Mammary epithelial cell (primary cell): ENCODE measurements at regions of chr10 and their contacts with region 1.

Region 1: DNA sequence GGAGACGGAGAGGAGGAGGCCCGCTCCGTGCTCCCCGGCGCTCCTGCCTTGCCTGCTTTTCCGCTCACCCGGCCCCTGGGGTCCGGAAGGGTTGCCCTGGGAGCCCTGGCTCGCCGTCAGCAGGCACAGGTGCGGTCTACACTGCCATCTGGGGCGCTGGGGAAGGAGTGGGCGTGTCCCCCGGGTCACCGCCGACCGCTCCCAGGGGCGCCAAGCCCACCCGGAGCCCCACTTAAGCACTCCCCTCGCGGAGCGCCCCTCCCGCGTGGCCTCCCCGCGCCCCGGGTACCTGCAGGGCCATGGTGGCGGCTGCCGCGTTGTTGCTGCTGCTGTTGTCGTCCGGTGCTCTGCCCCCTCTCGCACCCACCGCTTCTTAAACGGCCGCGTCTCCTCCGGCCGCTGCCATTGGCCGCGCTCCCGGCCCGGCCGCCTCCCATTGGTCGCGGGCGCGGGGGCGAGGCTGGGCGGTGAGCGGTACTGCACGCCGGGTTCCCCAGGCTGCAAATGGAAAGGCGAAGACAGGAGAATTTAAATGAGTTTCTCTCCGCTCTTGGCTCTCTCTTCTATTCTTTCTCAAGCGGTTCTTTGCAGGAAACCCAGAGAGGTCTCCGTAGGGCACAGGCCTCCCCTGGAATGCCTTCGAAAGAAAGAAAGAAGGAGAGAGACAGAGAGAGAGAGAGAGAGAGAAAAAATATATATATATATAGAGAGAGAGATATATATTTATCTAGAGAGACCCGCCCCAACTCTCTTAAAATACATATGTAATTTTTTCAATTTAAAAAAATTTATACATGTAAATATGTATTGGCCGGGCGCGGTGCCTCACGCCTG is at the start of gene ACBD7:
- DNase-seq: peak; percentile 80
- H3K4me3 ChIP-seq: peak within 1 kb of the TSS; percentile 62 to 68 (median 64)
- H3K27ac ChIP-seq: no peak within 1 kb of the TSS
- H3K4me1 ChIP-seq: peaks cover 4% of the 10 kb centered on the region
- H3K27me3 ChIP-seq: no peaks in the 10 kb centered on the region
- CTCF ChIP-seq: peak; percentile 18 to 34
- total RNA-seq, gene ACBD7: 0.33 to 0.85 TPM

Region 2: GRCh38 chr10:13348216-13349017 is 1740.2 kb before region 1 on chr10 and contains the start of gene SEPHS1:
- CTCF ChIA-PET with region 1: no interaction called
- dilution Hi-C with region 1: no loop called
- in situ Hi-C with region 1: no loop called
- intact Hi-C with region 1: loop called (anchors 5 kb)
- DNase-seq: peak; percentile 60
- H3K4me3 ChIP-seq: peak within 1 kb of the TSS; percentile 66 to 93 (median 69)
- H3K27ac ChIP-seq: peak within 1 kb of the TSS; percentile 72
- H3K4me1 ChIP-seq: peaks cover 18% of the 10 kb centered on the region
- H3K27me3 ChIP-seq: no peaks in the 10 kb centered on the region
- CTCF ChIP-seq: no peak
- total RNA-seq, gene SEPHS1: 30.2 to 34.6 TPM

Region 3: DNA sequence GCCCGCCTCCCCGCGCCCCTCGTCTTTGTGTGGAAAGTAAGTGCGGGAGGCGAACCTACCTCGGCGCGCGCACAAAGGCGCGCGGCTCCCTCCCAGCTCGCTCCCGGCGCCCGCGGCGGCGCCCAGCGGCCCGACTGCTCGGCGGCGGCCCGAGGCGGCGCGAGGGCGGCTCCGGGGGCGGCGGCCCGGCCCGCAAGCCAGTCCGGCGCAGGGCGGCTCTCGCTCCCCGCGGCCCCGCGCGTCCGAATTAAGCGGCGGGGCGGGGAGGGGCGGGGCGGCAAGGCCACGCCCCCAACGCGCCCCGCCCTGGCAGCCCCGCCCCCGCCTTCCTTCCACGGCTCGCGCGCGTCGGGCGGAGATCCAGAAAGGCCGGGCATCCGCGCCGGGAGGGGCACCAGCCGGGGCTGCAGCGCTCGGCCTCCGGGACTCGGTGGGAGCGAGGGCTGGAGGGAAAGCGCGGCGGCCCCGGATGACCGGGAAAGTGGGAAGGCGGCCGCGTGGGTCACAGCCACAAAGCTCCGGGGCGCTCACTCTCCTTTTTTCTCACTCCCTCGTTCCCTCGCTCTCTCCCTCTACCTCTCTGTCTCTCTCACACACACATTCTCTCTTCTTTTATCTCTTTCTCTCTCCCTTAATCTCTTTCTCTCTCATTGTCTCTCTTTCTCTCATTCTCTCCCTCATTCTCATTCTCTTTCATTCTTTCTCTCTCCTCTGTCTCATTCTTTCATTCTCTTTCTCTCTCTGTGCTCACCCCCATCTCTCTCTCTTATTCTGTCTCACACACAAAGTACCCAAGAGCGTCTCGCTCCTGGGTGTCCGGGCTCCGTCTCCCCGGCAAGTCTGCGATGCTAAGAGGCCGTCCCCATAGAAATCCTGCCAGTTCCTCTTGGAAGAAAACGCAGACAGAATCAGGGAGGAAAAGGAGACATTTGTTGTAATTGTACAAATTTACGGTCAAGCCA is 484.2 kb before region 1 on chr10:
- CTCF ChIA-PET with region 1: no interaction called
- dilution Hi-C with region 1: no loop called
- in situ Hi-C with region 1: no loop called
- intact Hi-C with region 1: loop called (anchors 10 kb)
- DNase-seq: peak; percentile 52
- H3K4me3 ChIP-seq: peak overlapping the region; percentile 33 to 63 (median 61)
- H3K27ac ChIP-seq: peak overlapping the region; percentile 30
- H3K4me1 ChIP-seq: peaks cover 11% of the 10 kb centered on the region
- H3K27me3 ChIP-seq: no peaks in the 10 kb centered on the region
- CTCF ChIP-seq: no peak

Region 4: GRCh38 chr10:15015451-15015850 is 73.2 kb before region 1 on chr10:
- CTCF ChIA-PET with region 1: no interaction called
- dilution Hi-C with region 1: no loop called
- in situ Hi-C with region 1: no loop called
- intact Hi-C with region 1: loop called (anchors 2 kb)
- DNase-seq: no peak
- H3K4me3 ChIP-seq: no peak overlapping the region
- H3K27ac ChIP-seq: no peak overlapping the region
- H3K4me1 ChIP-seq: peaks cover 17% of the 10 kb centered on the region
- H3K27me3 ChIP-seq: no peaks in the 10 kb centered on the region
- CTCF ChIP-seq: no peak

Region 5: DNA sequence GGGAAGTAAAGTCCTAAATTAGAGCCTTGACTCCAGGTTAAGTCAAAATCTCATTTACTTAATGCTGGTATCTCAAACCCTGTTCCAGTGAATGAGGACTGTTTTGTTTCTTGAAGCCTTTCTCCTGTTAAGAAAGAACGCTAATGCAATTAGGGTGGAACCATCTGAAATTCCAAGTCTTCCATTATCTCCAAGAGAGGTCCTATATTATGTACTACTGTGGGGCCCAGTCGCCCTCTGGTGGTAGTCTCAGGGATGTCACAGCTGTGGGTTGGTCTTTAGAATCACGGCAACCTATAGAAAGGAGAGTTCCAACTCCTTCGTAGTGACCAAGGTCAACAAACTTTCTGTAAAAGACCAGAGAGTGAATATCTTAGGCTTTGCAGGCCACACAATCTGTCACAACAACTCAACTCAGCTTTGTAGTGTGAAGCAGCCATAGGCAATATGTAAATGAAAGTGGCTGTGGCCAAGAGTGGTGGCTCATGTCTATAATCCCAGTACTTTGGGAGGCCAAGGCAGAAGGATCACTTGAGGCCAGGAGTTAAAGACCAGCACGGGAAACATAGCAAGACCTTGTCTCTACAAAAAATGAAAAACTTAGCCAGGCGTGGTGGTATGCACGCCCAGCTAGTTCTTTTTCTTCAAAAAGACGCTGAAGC is 17.8 kb after region 1 on chr10:
- CTCF ChIA-PET with region 1: no interaction called
- dilution Hi-C with region 1: no loop called
- in situ Hi-C with region 1: no loop called
- intact Hi-C with region 1: no loop called
- DNase-seq: peak; percentile 53
- H3K4me3 ChIP-seq: no peak overlapping the region
- H3K27ac ChIP-seq: no peak overlapping the region
- H3K4me1 ChIP-seq: no peaks in the 10 kb centered on the region
- H3K27me3 ChIP-seq: no peaks in the 10 kb centered on the region
- CTCF ChIP-seq: peak; percentile 96 to 98

Region 6: DNA sequence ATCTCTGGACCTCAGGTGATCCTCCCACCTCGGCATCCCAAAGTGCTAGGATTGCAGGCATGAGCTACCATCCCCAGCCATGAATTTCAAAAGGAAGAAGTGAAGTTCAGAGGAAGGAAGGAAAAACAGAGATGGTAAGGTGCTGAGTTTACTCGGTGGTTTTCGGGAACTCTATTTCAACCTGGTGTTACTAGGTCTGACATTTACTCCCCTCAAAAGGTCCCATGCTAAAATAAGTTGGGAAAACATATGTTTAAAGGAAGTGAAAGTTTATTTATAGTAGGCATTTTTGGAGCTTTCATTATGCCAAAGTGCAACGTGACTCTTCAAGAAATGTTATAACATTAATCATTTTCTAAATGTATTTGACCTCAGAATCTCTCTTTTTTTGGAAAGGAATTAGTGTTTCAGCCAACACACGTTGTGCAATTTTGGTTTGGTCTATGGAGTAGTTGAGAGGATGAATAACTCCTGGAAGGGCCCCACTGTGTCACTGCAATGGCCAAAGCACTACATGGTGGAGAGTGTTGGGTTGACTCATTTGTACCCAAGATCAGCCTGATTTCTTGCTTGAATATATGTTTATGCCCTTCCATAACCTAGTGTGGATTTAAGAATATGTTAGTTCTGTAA is 397.2 kb after region 1 on chr10:
- CTCF ChIA-PET with region 1: no interaction called
- dilution Hi-C with region 1: no loop called
- in situ Hi-C with region 1: no loop called
- intact Hi-C with region 1: no loop called
- DNase-seq: no peak
- H3K4me3 ChIP-seq: no peak overlapping the region
- H3K27ac ChIP-seq: no peak overlapping the region
- H3K4me1 ChIP-seq: no peaks in the 10 kb centered on the region
- H3K27me3 ChIP-seq: no peaks in the 10 kb centered on the region
- CTCF ChIP-seq: no peak